Panc1 (cell line): ENCODE measurements at regions of chr6 and their contacts with region 1.

Region 1: DNA sequence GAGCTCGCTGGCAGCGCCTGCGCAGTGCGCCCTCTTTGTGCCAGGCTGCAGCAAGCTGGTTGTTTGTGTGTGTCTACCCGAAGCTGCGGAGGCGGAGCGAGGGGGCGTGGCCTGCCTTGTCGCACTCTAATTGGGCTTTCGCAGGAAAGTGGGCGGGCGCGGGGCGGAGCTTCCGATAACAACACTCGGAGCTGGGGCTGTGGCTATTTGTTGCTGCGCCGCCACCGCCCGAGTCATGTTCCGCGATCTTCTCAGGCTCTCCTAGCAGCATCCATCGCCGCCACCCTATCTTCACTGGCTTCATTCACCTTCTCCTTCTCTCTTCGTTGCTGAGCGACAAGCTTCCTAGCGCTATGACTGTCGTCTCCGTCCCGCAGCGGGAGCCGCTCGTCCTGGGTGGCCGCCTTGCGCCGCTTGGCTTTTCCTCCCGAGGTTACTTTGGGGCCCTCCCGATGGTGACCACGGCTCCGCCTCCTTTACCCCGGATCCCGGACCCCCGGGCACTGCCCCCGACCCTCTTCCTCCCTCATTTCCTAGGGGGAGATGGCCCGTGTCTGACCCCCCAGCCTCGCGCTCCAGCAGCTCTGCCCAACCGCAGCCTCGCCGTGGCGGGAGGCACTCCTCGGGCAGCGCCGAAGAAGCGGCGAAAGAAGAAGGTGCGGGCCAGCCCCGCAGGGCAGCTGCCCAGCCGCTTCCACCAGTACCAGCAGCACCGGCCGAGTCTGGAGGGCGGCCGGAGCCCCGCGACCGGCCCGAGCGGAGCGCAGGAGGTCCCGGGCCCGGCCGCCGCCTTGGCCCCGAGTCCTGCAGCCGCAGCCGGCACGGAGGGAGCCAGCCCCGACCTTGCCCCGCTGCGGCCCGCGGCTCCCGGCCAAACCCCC is at the start of gene PNRC1:
- DNase-seq: peak; percentile 90
- ATAC-seq: peak; percentile 93
- H3K4me3 ChIP-seq: peak within 1 kb of the TSS; percentile 92 to 94
- H3K27ac ChIP-seq: peak within 1 kb of the TSS; percentile 98
- H3K4me1 ChIP-seq: peaks cover 16% of the 10 kb centered on the region
- H3K27me3 ChIP-seq: no peaks in the 10 kb centered on the region
- CTCF ChIP-seq: no peak
- total RNA-seq, gene PNRC1: 63.5 TPM

Region 2: GRCh38 chr6:89059227-89059626 is 21.6 kb before region 1 on chr6:
- CTCF ChIA-PET with region 1: no interaction called
- POLR2A ChIA-PET with region 1: interaction called, 12 read pairs
- in situ Hi-C with region 1: no loop called
- intact Hi-C with region 1: no loop called
- DNase-seq: no peak
- ATAC-seq: no peak
- H3K4me3 ChIP-seq: no peak overlapping the region
- H3K27ac ChIP-seq: no peak overlapping the region
- H3K4me1 ChIP-seq: no peaks in the 10 kb centered on the region
- H3K27me3 ChIP-seq: no peaks in the 10 kb centered on the region
- CTCF ChIP-seq: no peak

Region 3: GRCh38 chr6:89161326-89162046 is 80.7 kb after region 1 on chr6:
- CTCF ChIA-PET with region 1: no interaction called
- POLR2A ChIA-PET with region 1: no interaction called
- in situ Hi-C with region 1: no loop called
- intact Hi-C with region 1: no loop called
- DNase-seq: no peak
- ATAC-seq: no peak
- H3K4me3 ChIP-seq: no peak overlapping the region
- H3K27ac ChIP-seq: no peak overlapping the region
- H3K4me1 ChIP-seq: no peaks in the 10 kb centered on the region
- H3K27me3 ChIP-seq: no peaks in the 10 kb centered on the region
- CTCF ChIP-seq: no peak